CD14-positive monocyte (primary cell): ENCODE measurements at regions of chr2 and their contacts with region 1.

Region 1: DNA sequence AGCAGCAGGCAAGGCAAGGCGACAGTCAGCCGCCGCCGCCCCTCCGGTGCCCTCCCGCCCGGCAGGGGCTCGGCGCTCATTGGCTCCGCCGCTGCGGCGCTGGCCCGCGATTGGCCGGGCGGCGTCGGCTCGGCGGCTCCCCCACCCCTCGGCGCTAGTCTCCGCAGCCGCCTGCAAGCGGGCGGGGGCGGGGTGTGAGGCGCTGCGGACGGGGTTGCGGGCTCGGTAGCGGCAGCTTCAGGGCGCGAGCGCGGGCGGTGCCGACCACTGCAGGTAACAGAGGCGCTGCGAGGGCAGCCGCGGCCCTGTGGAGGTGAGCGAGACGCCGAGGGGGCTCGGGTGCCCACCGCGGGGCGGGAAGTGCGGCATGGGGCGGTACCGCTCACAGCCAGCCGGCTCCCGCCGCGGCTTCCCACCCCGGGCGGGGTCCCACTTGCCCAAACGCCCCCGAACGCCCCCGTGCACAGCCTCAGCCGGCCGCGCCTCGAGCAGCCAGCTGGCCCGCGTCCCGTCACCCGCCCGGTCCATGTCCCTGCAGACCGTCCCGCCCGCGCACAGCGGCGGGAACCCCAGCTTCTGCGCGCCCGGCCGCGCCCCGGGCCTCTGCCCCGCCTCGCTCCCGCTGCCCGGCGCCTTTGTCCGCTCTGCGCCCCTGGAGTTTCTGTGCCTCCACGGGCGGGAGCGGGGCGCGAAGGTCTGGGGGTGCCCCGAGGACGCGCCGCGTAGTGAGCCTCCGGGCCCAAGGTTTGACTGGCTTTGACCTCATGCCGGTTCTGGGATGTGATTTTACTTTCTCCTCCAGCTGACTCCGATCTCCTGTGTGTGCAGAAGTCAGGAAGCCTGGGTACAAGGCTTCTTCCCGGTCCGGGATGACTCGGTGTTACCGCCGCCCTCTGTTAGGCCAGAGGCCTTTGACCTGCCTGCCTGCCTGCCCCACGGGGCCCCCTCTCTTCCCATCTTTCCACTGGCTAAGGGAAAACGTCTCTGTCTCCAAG is at the start of gene SANBR:
- DNase-seq: peak; percentile 68 to 86 (median 83)
- H3K4me3 ChIP-seq: peak within 1 kb of the TSS; percentile 57 to 97 (median 83)
- H3K4me3 Mint-ChIP-seq: peak within 1 kb of the TSS; percentile 88 to 97
- H3K27ac ChIP-seq: peak within 1 kb of the TSS; percentile 33 to 58
- H3K27ac Mint-ChIP-seq: peak within 1 kb of the TSS; percentile 75 to 89 (median 80)
- H3K4me1 ChIP-seq: peaks cover 9 to 14% of the 10 kb centered on the region in 2 donors
- H3K4me1 Mint-ChIP-seq: peaks cover 18% of the 10 kb centered on the region
- H3K27me3 ChIP-seq: no peaks in the 10 kb centered on the region
- H3K27me3 Mint-ChIP-seq: peaks cover 0 to 2% (median 0%) of the 10 kb centered on the region in 3 donors
- CTCF ChIP-seq: no peak
- polyA plus RNA-seq, gene SANBR: 1.9 to 3.5 (median 3.4) TPM

Region 2: GRCh38 chr2:61016808-61017555 is 49.0 kb before region 1 on chr2:
- intact Hi-C with region 1: loop called in 1 of 2 experiments (anchors 5 kb)
- DNase-seq: peak in 2 of 3 donors; percentile 62 to 65
- H3K4me3 ChIP-seq: peak overlapping the region; percentile 75 to 97 (median 89)
- H3K4me3 Mint-ChIP-seq: peak overlapping the region; percentile 99
- H3K27ac ChIP-seq: peak overlapping the region; percentile 57 to 88
- H3K27ac Mint-ChIP-seq: peak overlapping the region; percentile 88 to 97 (median 93)
- H3K4me1 ChIP-seq: peaks cover 43 to 52% of the 10 kb centered on the region in 2 donors
- H3K4me1 Mint-ChIP-seq: peaks cover 54% of the 10 kb centered on the region
- H3K27me3 ChIP-seq: no peaks in the 10 kb centered on the region
- H3K27me3 Mint-ChIP-seq: no peaks in the 10 kb centered on the region
- CTCF ChIP-seq: no peak

Region 3: DNA sequence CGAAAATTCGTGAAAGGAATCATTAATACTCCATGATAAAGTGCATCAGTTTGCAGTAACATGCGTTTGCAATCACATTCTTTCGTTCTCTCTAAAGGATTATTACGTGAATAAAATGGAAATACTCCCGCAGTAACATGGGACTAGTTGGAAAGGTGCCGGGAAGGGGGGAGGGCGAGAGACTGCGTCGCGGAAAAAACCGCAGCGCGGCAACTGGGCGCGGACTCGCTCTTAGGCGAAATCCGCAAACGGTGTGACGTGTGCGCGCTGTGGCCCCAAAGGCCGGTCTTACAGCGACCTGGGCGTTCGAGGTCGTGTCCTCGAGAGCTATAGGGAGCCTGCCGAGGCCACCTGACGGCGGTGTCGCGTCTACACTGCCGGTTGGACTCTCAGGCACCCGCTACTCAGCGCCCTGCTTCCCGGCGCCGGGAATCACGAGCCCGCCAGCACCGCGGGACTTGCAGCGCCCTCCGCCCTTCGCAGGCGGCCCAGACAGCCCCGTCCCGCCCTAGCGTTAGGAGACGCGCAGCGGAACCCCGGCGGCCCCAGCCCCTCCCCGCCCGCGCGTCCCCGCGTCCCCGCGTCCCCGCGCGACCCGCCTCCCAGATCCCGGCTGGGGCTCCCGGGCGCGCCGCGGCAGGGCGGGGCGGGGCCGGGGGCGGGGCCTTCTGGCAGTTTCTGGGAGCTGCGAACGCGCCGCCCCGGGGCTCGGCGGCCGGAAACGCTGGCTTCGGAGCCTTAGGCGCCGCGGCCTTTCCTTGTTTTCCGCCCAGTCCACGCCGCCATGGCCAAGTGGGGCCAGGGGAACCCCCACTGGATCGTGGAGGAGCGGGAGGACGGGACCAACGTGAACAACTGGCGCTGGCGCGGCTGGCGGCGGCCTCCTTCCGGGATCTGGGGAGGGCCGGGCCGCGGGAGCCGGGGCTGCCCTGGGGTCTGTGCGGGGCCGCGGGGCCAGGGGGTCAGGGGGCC is 111.0 kb after region 1 on chr2:
- intact Hi-C with region 1: loop called (anchors 2 to 5 kb)
- DNase-seq: peak; percentile 86 to 90 (median 89)
- H3K4me3 ChIP-seq: peak overlapping the region; percentile 81 to 93 (median 92)
- H3K4me3 Mint-ChIP-seq: peak overlapping the region; percentile 89 to 97
- H3K27ac ChIP-seq: peak overlapping the region; percentile 90 to 95
- H3K27ac Mint-ChIP-seq: peak overlapping the region; percentile 89 to 96 (median 95)
- H3K4me1 ChIP-seq: peaks cover 23 to 35% of the 10 kb centered on the region in 2 donors
- H3K4me1 Mint-ChIP-seq: peaks cover 44% of the 10 kb centered on the region
- H3K27me3 ChIP-seq: no peaks in the 10 kb centered on the region
- H3K27me3 Mint-ChIP-seq: peaks cover 8 to 11% (median 10%) of the 10 kb centered on the region in 3 donors
- CTCF ChIP-seq: no peak

Region 4: GRCh38 chr2:62596061-62596921 is 1530.3 kb after region 1 on chr2:
- intact Hi-C with region 1: no loop called
- DNase-seq: no peak
- H3K4me3 ChIP-seq: no peak overlapping the region
- H3K4me3 Mint-ChIP-seq: no peak overlapping the region
- H3K27ac ChIP-seq: no peak overlapping the region
- H3K27ac Mint-ChIP-seq: no peak overlapping the region
- H3K4me1 ChIP-seq: no peaks in the 10 kb centered on the region
- H3K4me1 Mint-ChIP-seq: no peaks in the 10 kb centered on the region
- H3K27me3 ChIP-seq: no peaks in the 10 kb centered on the region
- H3K27me3 Mint-ChIP-seq: no peaks in the 10 kb centered on the region
- CTCF ChIP-seq: no peak